ENCODE measurements at regions of chr6 and their contacts with region 1.

Region 1: DNA sequence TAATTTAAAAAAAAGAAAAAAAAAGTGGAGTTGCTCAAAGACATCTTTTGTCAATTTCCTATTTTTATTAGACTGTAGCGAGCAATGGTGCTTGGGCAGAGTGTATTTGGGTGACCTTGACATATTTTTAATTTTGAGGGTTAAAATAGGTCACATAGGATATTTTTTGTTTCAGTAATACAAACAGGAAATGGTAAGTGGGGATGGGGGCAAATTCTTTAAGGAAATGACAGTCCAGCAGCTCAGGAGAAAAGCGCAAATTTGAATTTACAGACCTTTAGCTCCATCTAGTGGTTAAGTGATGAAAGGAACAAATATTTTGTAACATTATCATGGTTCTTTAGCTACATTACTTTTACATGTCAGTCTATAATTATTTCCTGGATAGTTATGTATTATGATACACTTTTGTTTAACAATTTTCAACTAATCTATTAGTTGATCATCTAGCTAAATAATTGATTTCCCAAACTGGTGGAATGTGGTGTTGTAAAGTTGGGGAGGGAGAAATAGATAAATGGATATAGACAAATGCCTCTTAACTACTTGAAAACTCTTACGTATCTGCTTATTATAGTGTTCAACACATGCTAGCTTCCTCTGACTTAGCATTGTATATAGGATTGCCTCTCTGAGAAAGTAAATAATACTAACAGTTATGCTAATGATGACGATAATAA is 10.0 kb downstream of the CITED2 start:
- DNase-seq: no peak
- H3K4me3 ChIP-seq: no peak overlapping the region
- H3K27ac ChIP-seq: no peak overlapping the region
- H3K27me3 ChIP-seq: no peaks in the 10 kb centered on the region
- CTCF ChIP-seq: peak; percentile 60

Region 2: DNA sequence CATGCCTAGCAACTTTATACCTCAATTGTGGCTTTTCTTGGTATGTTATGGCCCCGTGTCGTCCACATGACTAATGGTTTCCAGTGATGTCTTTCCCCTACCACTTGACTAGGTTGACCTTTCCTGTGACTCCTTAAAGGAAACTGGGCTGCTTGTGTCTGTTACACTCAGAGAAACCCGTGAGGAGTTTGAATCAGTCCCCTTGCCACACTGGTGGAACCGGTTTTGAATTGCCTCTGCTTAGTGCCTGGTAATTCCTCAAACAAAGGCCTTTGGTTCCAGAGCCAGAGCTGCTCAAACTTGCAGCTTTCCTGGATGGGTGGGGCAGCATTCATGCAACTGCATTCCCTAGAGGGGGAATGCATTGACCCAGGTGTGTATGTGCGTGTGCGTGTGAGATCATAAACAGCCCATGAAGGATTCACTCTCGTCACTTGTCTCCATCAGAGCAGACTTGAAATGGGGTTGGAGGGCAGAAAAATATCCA is 546.6 kb before region 1 on chr6:
- CTCF ChIA-PET with region 1: interaction called, 23 read pairs
- POLR2A ChIA-PET with region 1: no interaction called
- DNase-seq: peak; percentile 4
- H3K4me3 ChIP-seq: no peak overlapping the region
- H3K27ac ChIP-seq: no peak overlapping the region
- H3K27me3 ChIP-seq: no peaks in the 10 kb centered on the region
- CTCF ChIP-seq: no peak

Region 3: DNA sequence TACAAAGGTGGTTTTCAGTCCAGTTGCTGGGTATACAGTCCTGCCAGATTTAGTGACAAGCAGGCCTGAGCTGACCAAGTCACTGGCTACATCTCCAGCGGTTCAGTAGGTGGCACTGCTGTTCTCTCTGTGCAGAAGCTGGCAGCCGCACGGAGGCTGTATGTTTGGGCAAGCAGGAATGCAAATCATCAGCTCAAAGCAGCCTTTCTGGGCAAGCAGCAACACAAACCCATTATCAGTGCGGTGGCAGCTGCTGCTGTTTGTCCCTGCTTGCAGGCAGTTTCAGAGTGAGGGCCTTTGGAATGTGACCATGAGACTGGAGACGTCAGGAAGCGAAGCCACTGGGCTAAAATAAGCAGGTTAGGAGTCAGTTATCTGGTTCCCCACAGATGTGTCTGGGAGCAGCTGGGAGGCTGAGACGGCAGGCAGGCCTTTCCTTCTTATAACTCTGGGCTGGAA is 145.1 kb before region 1 on chr6:
- CTCF ChIA-PET with region 1: interaction called, 139 read pairs
- POLR2A ChIA-PET with region 1: interaction called, 10 read pairs
- DNase-seq: peak; percentile 77
- H3K4me3 ChIP-seq: no peak overlapping the region
- H3K27ac ChIP-seq: no peak overlapping the region
- H3K27me3 ChIP-seq: no peaks in the 10 kb centered on the region
- CTCF ChIP-seq: peak; percentile 91

Region 4: DNA sequence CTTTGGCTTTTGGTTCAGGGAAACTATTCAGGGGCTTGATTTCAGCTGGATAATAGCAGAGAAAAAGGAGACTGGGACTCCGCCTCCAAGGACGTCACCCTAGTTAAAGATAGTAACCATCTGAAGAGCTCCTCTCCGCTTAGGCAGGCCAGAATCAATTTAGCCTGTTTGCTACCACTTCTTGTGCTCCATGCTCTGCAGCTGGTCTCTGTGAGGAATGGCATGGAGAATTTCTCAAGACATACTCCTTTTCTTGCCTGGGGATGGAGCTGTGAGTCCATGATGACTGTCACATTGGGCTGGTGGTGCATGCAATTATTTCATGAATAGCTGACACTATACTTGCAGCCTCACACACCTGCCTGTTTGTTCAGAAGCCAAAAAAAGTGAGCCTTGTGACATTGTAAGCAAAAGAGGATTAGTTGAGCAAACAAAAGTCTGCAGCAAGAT is 134.0 kb before region 1 on chr6:
- CTCF ChIA-PET with region 1: interaction called, 19 read pairs
- POLR2A ChIA-PET with region 1: interaction called, 3 read pairs
- DNase-seq: no peak
- H3K4me3 ChIP-seq: no peak overlapping the region
- H3K27ac ChIP-seq: no peak overlapping the region
- H3K27me3 ChIP-seq: no peaks in the 10 kb centered on the region
- CTCF ChIP-seq: peak; percentile 17; the same call in 1 of the 2 replicates

Measured in AG04450 (cell line).